A673 (cell line): ENCODE measurements at regions of chr15 and their contacts with region 1.

Region 1: DNA sequence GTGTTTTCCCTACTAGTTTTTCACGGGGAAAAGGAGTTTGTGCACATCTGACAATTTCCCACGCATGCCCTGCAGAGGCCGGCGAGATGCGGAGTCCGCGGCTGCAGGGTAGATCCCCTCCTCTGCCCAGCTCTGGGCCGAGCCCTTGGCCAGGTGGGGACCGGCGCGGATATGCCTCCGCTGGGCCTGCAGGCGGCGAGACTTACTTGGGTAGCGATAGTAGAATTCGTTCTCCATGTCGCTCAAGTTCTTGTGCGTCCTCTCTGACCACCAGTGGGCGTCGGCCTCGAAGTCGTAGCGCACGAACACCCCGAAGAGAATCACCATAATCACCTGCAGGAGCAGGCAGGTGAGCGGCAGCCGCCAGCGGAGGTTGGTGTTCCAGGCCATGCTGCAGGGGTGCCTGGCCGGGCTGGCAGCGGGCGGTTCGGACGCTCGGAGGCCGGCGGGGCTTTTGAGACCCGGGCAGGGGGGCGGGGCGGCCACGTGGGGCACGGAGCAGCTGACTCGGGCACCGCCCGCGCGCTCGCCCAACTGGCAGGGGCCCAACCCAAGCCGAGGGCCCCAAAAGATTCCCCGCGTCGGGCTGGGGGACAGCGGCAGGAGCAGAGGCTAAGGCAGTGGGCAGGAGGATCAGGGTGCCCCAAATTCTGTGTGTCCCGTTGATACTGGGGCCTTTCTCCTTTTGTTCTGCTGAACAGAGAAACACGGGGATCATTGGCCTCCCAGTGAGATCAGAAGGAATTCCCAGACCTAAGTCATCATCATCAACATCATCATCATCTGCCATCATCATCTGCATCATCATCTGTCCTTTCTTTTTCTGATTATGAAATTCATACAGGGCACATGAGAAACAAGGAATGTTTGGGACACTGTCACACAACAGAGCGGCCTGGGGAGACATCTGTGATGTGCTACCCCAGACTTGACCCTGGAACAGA is at the start of gene RHCG:
- DNase-seq: peak; percentile 56
- H3K4me3 ChIP-seq: peak within 1 kb of the TSS; percentile 44
- H3K27ac ChIP-seq: no peak within 1 kb of the TSS
- H3K4me1 ChIP-seq: no peaks in the 10 kb centered on the region
- H3K27me3 ChIP-seq: peaks cover 9% of the 10 kb centered on the region
- CTCF ChIP-seq: peak; percentile 58
- total RNA-seq, gene RHCG: 1.2 and 1.4 TPM in 2 replicates

Region 2: GRCh38 chr15:89514596-89515406 is 18.4 kb after region 1 on chr15:
- CTCF ChIA-PET with region 1: no interaction called
- POLR2A ChIA-PET with region 1: no interaction called
- intact Hi-C with region 1: loop called (anchors 1 kb)
- DNase-seq: no peak
- H3K4me3 ChIP-seq: no peak overlapping the region
- H3K27ac ChIP-seq: no peak overlapping the region
- H3K4me1 ChIP-seq: no peaks in the 10 kb centered on the region
- H3K27me3 ChIP-seq: no peaks in the 10 kb centered on the region
- CTCF ChIP-seq: no peak

Region 3: GRCh38 chr15:89556413-89557262 is 60.2 kb after region 1 on chr15:
- CTCF ChIA-PET with region 1: no interaction called
- POLR2A ChIA-PET with region 1: no interaction called
- intact Hi-C with region 1: loop called (anchors 2 kb)
- DNase-seq: peak; percentile 85
- H3K4me3 ChIP-seq: no peak overlapping the region
- H3K27ac ChIP-seq: no peak overlapping the region
- H3K4me1 ChIP-seq: no peaks in the 10 kb centered on the region
- H3K27me3 ChIP-seq: no peaks in the 10 kb centered on the region
- CTCF ChIP-seq: peak; percentile 83